PC-3 (cell line): ENCODE measurements at regions of chr4 and their contacts with region 1.

Region 1: DNA sequence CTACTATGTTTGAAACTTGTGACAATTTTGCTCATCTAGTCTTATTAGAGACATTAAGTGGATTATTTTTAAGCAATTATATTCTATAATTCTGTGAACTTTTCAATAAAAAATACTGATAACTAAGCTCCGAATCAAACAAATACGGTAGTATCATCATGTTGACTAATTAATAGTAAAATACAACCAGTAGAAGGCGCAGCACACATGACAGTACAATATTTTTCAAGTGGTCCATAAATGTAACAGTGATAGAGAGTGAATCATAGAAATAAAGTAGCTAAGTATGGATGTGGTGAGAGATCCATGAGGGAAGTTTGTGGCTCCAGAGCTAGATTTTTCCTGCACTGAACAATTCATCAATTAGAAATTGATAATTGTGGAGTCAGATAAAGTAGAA is 666.2 kb downstream of the KCTD8 start:
- DNase-seq: peak; percentile 54
- ATAC-seq: peak; percentile 65
- H3K4me3 ChIP-seq: peak overlapping the region; percentile 62
- H3K27ac ChIP-seq: no peak overlapping the region
- H3K4me1 ChIP-seq: no peaks in the 10 kb centered on the region
- H3K27me3 ChIP-seq: no peaks in the 10 kb centered on the region
- CTCF ChIP-seq: peak; percentile 69

Region 2: GRCh38 chr4:43709443-43709842 is 72.9 kb before region 1 on chr4:
- CTCF ChIA-PET with region 1: no interaction called
- POLR2A ChIA-PET with region 1: no interaction called
- intact Hi-C with region 1: no loop called
- DNase-seq: peak; percentile 3
- ATAC-seq: no peak
- H3K4me3 ChIP-seq: no peak overlapping the region
- H3K27ac ChIP-seq: no peak overlapping the region
- H3K4me1 ChIP-seq: no peaks in the 10 kb centered on the region
- H3K27me3 ChIP-seq: no peaks in the 10 kb centered on the region
- CTCF ChIP-seq: 0 out of 2 replicates have a peak, but pooled peaks have one; percentile 40

Region 3: DNA sequence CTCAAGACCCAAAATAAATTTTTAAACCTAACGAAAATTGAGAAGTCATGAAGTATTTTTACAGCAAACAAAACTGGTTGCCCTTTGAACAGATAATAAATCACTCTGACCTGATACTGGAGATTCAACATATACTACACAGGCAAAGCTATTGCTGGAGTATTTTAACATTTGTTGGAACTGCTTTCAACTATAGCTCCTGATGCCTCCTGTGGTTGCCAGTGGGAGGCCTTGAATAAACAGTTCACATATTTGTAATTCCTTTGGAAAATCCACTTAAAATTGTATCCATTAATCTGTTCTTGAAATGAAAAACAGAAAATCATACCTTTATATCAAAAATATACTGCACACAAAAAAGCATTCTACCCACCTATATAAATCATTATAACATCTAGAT is 61.1 kb after region 1 on chr4:
- CTCF ChIA-PET with region 1: interaction called, 3 read pairs
- POLR2A ChIA-PET with region 1: no interaction called
- intact Hi-C with region 1: loop called (anchors 2 kb)
- DNase-seq: peak; percentile 54
- ATAC-seq: peak; percentile 77
- H3K4me3 ChIP-seq: no peak overlapping the region
- H3K27ac ChIP-seq: no peak overlapping the region; the same call in 1 of the 2 replicates
- H3K4me1 ChIP-seq: peaks cover 21% of the 10 kb centered on the region
- H3K27me3 ChIP-seq: no peaks in the 10 kb centered on the region
- CTCF ChIP-seq: peak; percentile 54

Region 4: GRCh38 chr4:44150091-44150576 is 367.7 kb after region 1 on chr4:
- CTCF ChIA-PET with region 1: no interaction called
- POLR2A ChIA-PET with region 1: no interaction called
- intact Hi-C with region 1: loop called (anchors 2 kb)
- DNase-seq: peak; percentile 87
- ATAC-seq: peak; percentile 93
- H3K4me3 ChIP-seq: peak overlapping the region; percentile 13; the same call in 1 of the 2 replicates
- H3K27ac ChIP-seq: peak overlapping the region; percentile 82
- H3K4me1 ChIP-seq: peaks cover 50% of the 10 kb centered on the region
- H3K27me3 ChIP-seq: no peaks in the 10 kb centered on the region
- CTCF ChIP-seq: no peak

Region 5: GRCh38 chr4:44256414-44256813 is 474.0 kb after region 1 on chr4:
- CTCF ChIA-PET with region 1: no interaction called
- POLR2A ChIA-PET with region 1: no interaction called
- intact Hi-C with region 1: loop called (anchors 10 kb)
- DNase-seq: peak; percentile 8
- ATAC-seq: peak; percentile 37; the same call in 1 of the 2 replicates
- H3K4me3 ChIP-seq: no peak overlapping the region
- H3K27ac ChIP-seq: no peak overlapping the region
- H3K4me1 ChIP-seq: no peaks in the 10 kb centered on the region
- H3K27me3 ChIP-seq: no peaks in the 10 kb centered on the region
- CTCF ChIP-seq: 0 out of 2 replicates have a peak, but pooled peaks have one; percentile 17

Region 6: GRCh38 chr4:44629280-44629866 is 847.0 kb after region 1 on chr4:
- CTCF ChIA-PET with region 1: no interaction called
- POLR2A ChIA-PET with region 1: no interaction called
- intact Hi-C with region 1: loop called (anchors 2 kb)
- DNase-seq: peak; percentile 81
- ATAC-seq: peak; percentile 77
- H3K4me3 ChIP-seq: no peak overlapping the region
- H3K27ac ChIP-seq: no peak overlapping the region
- H3K4me1 ChIP-seq: no peaks in the 10 kb centered on the region
- H3K27me3 ChIP-seq: no peaks in the 10 kb centered on the region
- CTCF ChIP-seq: peak; percentile 62